Activated B cell treated with CpG ODN at 0.5 μM for 24 hours (primary cell): ENCODE measurements at regions of chr11 and their contacts with region 1.

Region 1: GRCh38 chr11:127345819-127346459 is 345.4 kb upstream of the KIRREL3 start:
- DNase-seq: no peak
- ATAC-seq: no peak
- H3K4me3 Mint-ChIP-seq: no peak overlapping the region
- H3K27ac Mint-ChIP-seq: no peak overlapping the region
- H3K4me1 Mint-ChIP-seq: no peaks in the 10 kb centered on the region
- H3K27me3 Mint-ChIP-seq: peaks cover 2% of the 10 kb centered on the region
- CTCF ChIP-seq: no peak

Region 2: GRCh38 chr11:125923012-125923579 is 1422.8 kb before region 1 on chr11:
- CTCF ChIA-PET with region 1: no interaction called
- POLR2A ChIA-PET with region 1: no interaction called
- intact Hi-C with region 1: loop called (anchors 10 kb)
- DNase-seq: no peak
- ATAC-seq: no peak
- H3K4me3 Mint-ChIP-seq: no peak overlapping the region
- H3K27ac Mint-ChIP-seq: no peak overlapping the region
- H3K4me1 Mint-ChIP-seq: no peaks in the 10 kb centered on the region
- H3K27me3 Mint-ChIP-seq: peaks cover 15% of the 10 kb centered on the region
- CTCF ChIP-seq: peak; percentile 21

Region 3: GRCh38 chr11:126440792-126441514 is 905.0 kb before region 1 on chr11:
- CTCF ChIA-PET with region 1: interaction called, 22 read pairs
- POLR2A ChIA-PET with region 1: no interaction called
- intact Hi-C with region 1: loop called (anchors 1 kb)
- DNase-seq: peak; percentile 65
- ATAC-seq: peak; percentile 57
- H3K4me3 Mint-ChIP-seq: no peak overlapping the region
- H3K27ac Mint-ChIP-seq: no peak overlapping the region
- H3K4me1 Mint-ChIP-seq: peaks cover 4% of the 10 kb centered on the region
- H3K27me3 Mint-ChIP-seq: peaks cover 9% of the 10 kb centered on the region
- CTCF ChIP-seq: peak; percentile 70